ENCODE measurements at regions of chr13 and their contacts with region 1.

Region 1: GRCh38 chr13:95327190-95327589 is 25.9 kb upstream of the ABCC4 start:
- DNase-seq: peak; percentile 92
- H3K4me3 ChIP-seq: no peak overlapping the region
- H3K27ac ChIP-seq: peak overlapping the region in 3 of 4 donors; percentile 45 to 78 (median 57)
- H3K4me1 ChIP-seq: peaks cover 0 to 20% (median 7%) of the 10 kb centered on the region in 4 donors
- H3K27me3 ChIP-seq: no peaks in the 10 kb centered on the region
- CTCF ChIP-seq: no peak
- EP300 ChIP-seq: peak; percentile 71 to 97 (median 86)
- POLR2A ChIP-seq: no peak

Region 2: DNA sequence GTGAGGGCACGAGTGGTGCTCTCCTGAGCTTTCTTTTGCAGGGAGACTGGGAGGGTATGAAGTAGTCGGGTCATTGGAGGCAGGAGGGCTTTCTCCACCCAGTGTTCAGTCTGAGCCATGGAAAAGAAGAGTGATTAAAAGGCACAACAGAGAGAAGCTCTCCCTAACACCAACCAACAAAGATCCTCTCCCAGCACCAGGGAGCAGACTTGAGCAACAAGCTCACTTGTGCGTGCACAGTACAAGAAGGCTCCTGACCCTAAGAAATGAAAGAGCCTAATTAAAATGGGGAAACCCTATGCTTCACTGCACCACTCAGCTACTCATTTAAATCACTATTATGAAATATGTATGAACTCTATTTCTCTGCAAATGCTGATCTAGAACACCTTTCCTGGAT is 338.5 kb before region 1 on chr13:
- intact Hi-C with region 1: no loop called
- DNase-seq: no peak
- H3K4me3 ChIP-seq: no peak overlapping the region
- H3K27ac ChIP-seq: no peak overlapping the region
- H3K4me1 ChIP-seq: no peaks in the 10 kb centered on the region
- H3K27me3 ChIP-seq: no peaks in the 10 kb centered on the region
- CTCF ChIP-seq: no peak
- EP300 ChIP-seq: no peak
- POLR2A ChIP-seq: no peak

Region 3: GRCh38 chr13:95267662-95268342 is 59.4 kb before region 1 on chr13:
- intact Hi-C with region 1: loop called (anchors 5 kb)
- DNase-seq: peak; percentile 73
- H3K4me3 ChIP-seq: no peak overlapping the region
- H3K27ac ChIP-seq: peak overlapping the region in 3 of 4 donors; percentile 59 to 80 (median 79)
- H3K4me1 ChIP-seq: peaks cover 2 to 56% (median 53%) of the 10 kb centered on the region in 4 donors
- H3K27me3 ChIP-seq: no peaks in the 10 kb centered on the region
- CTCF ChIP-seq: no peak
- EP300 ChIP-seq: no peak
- POLR2A ChIP-seq: no peak

Measured in sigmoid colon (tissue), 7 donors.